H1 (cell line): ENCODE measurements at regions of chr9 and their contacts with region 1.

Region 1: DNA sequence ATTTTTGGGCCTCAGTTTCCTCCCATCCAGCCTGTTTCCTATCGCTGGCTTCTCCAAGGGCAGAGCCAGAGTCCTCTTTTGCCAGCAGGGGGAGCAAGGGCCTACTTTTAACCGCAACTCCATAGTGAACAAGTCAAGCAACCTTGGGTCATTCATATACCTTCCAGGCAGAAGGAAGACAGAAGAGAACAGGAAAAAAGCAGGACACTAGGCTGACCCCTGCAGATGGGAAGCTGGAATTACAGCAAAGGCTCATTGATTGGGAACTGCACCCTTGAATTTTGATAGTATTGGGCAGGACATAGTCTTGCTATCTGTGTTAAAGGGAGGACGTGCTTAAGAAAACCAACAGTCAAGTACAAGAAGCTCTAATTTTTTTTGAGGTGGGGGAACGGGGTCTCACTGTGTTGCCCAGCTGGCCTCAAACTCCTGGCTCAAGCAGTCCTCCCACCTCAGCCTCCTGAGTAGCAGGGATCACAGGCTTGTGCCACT is 30.1 kb downstream of the QRFP start:
- DNase-seq: peak; percentile 85 to 88
- H3K4me3 ChIP-seq: no peak overlapping the region
- H3K27ac ChIP-seq: no peak overlapping the region
- H3K4me1 ChIP-seq: no peaks in the 10 kb centered on the region
- H3K27me3 ChIP-seq: no peaks in the 10 kb centered on the region
- CTCF ChIP-seq: peak; percentile 67 to 99 (median 95)
- EP300 ChIP-seq: no peak
- POLR2A ChIP-seq: no peak
- RAD21 ChIP-seq: peak; percentile 62 to 70

Region 2: GRCh38 chr9:130701056-130702022 is 165.2 kb before region 1 on chr9:
- CTCF ChIA-PET with region 1: interaction called, 317 read pairs
- POLR2A ChIA-PET with region 1: interaction called, 11 read pairs
- DNase-seq: peak in 1 of 2 experiments; percentile 93
- H3K4me3 ChIP-seq: no peak overlapping the region
- H3K27ac ChIP-seq: 0 out of 2 replicates have a peak overlapping the region, but pooled peaks have one; percentile 2
- H3K4me1 ChIP-seq: no peaks in the 10 kb centered on the region; a peak in 1 of 7 replicates
- H3K27me3 ChIP-seq: no peaks in the 10 kb centered on the region
- CTCF ChIP-seq: peak; percentile 87 to 98 (median 97)
- EP300 ChIP-seq: no peak
- POLR2A ChIP-seq: no peak
- RAD21 ChIP-seq: peak; percentile 75 to 79

Region 3: DNA sequence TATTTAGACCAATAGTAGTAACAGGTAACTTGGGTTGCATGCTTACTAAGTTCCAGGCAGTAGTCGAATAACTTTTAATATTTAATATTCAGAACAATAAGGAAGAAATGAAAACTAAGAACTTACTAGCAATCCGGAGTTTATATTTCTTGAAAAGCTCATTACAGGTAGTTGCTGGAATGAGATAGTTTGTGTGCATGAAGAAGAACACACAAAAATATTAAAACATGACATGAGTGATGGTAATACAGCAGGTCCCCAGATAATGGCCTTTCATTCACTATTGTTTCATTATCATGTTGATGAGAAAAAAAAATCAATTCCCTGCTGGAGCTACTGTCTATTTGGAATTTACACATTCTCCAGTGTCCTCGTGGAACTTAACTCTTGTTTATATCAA is 128.2 kb before region 1 on chr9:
- CTCF ChIA-PET with region 1: interaction called, 14 read pairs
- POLR2A ChIA-PET with region 1: no interaction called
- DNase-seq: no peak
- H3K4me3 ChIP-seq: no peak overlapping the region
- H3K27ac ChIP-seq: no peak overlapping the region
- H3K4me1 ChIP-seq: peaks cover 0 to 2% (median 0%) of the 10 kb centered on the region in 4 experiments; a peak in 1 of 7 replicates
- H3K27me3 ChIP-seq: no peaks in the 10 kb centered on the region
- CTCF ChIP-seq: no peak
- EP300 ChIP-seq: no peak
- POLR2A ChIP-seq: no peak
- RAD21 ChIP-seq: no peak

Region 4: GRCh38 chr9:130815242-130815808 is 51.2 kb before region 1 on chr9:
- CTCF ChIA-PET with region 1: interaction called, 10 read pairs
- POLR2A ChIA-PET with region 1: no interaction called
- DNase-seq: no peak
- H3K4me3 ChIP-seq: no peak overlapping the region
- H3K27ac ChIP-seq: no peak overlapping the region
- H3K4me1 ChIP-seq: peaks cover 0 to 2% (median 0%) of the 10 kb centered on the region in 4 experiments; a peak in 1 of 7 replicates
- H3K27me3 ChIP-seq: no peaks in the 10 kb centered on the region
- CTCF ChIP-seq: no peak
- EP300 ChIP-seq: no peak
- POLR2A ChIP-seq: no peak
- RAD21 ChIP-seq: no peak

Region 5: DNA sequence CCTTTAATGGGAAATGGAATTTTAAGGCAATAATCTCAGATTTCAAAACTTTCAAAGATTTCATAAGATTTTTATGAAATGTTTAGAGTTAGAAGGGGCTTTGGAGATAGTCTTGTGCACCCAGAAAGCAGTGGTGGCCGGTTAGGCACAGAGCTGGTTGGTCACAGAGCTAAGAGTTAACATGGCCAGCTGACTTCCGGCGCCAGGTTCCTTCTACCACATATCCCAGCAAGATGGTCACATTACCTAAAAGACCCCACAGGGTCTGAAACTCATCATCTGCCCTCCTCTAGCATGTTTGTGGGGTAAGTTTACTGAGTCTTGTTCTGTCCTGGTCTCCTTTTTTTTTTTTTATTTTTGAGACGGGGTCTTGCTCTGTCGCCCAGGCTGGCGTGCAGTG is 10.8 kb after region 1 on chr9:
- CTCF ChIA-PET with region 1: interaction called, 29 read pairs
- POLR2A ChIA-PET with region 1: interaction called, 6 read pairs
- DNase-seq: no peak
- H3K4me3 ChIP-seq: no peak overlapping the region
- H3K27ac ChIP-seq: no peak overlapping the region
- H3K4me1 ChIP-seq: no peaks in the 10 kb centered on the region
- H3K27me3 ChIP-seq: no peaks in the 10 kb centered on the region
- CTCF ChIP-seq: no peak
- EP300 ChIP-seq: no peak
- POLR2A ChIP-seq: no peak
- RAD21 ChIP-seq: no peak

Region 6: GRCh38 chr9:130901498-130902203 is 35.1 kb after region 1 on chr9:
- CTCF ChIA-PET with region 1: interaction called, 15 read pairs
- POLR2A ChIA-PET with region 1: no interaction called
- DNase-seq: no peak
- H3K4me3 ChIP-seq: no peak overlapping the region
- H3K27ac ChIP-seq: no peak overlapping the region
- H3K4me1 ChIP-seq: no peaks in the 10 kb centered on the region
- H3K27me3 ChIP-seq: no peaks in the 10 kb centered on the region
- CTCF ChIP-seq: no peak
- EP300 ChIP-seq: no peak
- POLR2A ChIP-seq: no peak
- RAD21 ChIP-seq: no peak

Region 7: DNA sequence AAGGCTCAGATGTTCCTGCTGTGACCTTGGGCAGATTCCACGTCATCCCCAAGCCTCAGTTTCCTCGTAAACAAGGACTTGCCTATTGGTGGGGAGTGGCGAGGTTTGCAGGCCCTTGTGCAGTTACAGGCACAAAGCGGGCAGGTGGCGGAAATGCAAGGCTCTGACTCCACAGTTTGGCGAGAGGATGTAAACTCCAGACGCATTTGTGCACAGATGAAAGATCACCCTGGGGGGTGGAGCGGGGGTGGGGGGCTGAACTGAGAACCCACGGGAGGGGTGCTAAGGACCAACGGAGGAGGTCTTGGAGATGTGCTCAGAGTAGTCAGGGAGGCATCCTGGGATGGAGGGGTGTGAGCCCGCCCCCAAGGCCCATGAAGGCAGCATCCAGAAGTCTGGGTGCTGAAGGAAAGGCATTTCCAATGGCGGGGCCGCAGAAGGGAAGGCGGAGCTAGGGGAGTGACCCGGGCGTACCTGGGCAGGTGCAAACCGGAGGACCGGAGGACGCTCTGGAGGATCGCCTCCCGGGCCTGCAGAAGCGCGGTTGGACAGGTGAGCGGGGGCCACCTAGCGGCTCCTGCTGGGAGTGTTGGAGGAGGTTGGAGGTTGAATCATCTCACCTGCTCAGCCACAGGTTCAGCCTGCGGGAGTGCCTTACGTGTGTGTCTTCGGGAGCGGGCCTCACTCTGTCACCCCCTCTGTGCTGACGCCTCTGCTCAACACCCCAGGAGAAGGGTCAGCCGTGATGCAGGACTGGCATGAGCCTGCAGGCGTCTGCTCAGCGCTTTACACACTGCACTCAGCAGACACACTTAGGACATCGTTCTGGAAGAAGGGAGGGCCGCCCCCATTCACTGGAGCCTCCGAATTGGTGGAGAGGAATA is 74.4 kb after region 1 on chr9:
- CTCF ChIA-PET with region 1: interaction called, 32 read pairs
- POLR2A ChIA-PET with region 1: no interaction called
- DNase-seq: peak; percentile 85 to 99
- H3K4me3 ChIP-seq: peak overlapping the region in 1 of 4 experiments; percentile 96; a peak in 3 of 8 replicates
- H3K27ac ChIP-seq: no peak overlapping the region
- H3K4me1 ChIP-seq: peaks cover 8 to 34% (median 15%) of the 10 kb centered on the region in 4 experiments
- H3K27me3 ChIP-seq: peaks cover 18 to 44% (median 32%) of the 10 kb centered on the region in 4 experiments
- CTCF ChIP-seq: peak in 2 of 3 experiments; percentile 90 to 97; a peak in 3 of 4 replicates
- EP300 ChIP-seq: no peak
- POLR2A ChIP-seq: no peak
- RAD21 ChIP-seq: peak; percentile 87 to 88

Region 8: GRCh38 chr9:131167146-131167692 is 300.7 kb after region 1 on chr9:
- CTCF ChIA-PET with region 1: no interaction called
- POLR2A ChIA-PET with region 1: no interaction called
- DNase-seq: no peak
- H3K4me3 ChIP-seq: no peak overlapping the region
- H3K27ac ChIP-seq: no peak overlapping the region
- H3K4me1 ChIP-seq: no peaks in the 10 kb centered on the region
- H3K27me3 ChIP-seq: no peaks in the 10 kb centered on the region
- CTCF ChIP-seq: no peak
- EP300 ChIP-seq: no peak
- POLR2A ChIP-seq: no peak
- RAD21 ChIP-seq: no peak

Region 9: GRCh38 chr9:131214286-131214856 is 347.9 kb after region 1 on chr9:
- CTCF ChIA-PET with region 1: no interaction called
- POLR2A ChIA-PET with region 1: no interaction called
- DNase-seq: no peak
- H3K4me3 ChIP-seq: no peak overlapping the region
- H3K27ac ChIP-seq: no peak overlapping the region
- H3K4me1 ChIP-seq: peaks cover 0 to 2% (median 0%) of the 10 kb centered on the region in 4 experiments; a peak in 1 of 7 replicates
- H3K27me3 ChIP-seq: no peaks in the 10 kb centered on the region
- CTCF ChIP-seq: no peak
- EP300 ChIP-seq: no peak
- POLR2A ChIP-seq: no peak
- RAD21 ChIP-seq: no peak